ENCODE measurements at regions of chrX and their contacts with region 1.

Region 1: DNA sequence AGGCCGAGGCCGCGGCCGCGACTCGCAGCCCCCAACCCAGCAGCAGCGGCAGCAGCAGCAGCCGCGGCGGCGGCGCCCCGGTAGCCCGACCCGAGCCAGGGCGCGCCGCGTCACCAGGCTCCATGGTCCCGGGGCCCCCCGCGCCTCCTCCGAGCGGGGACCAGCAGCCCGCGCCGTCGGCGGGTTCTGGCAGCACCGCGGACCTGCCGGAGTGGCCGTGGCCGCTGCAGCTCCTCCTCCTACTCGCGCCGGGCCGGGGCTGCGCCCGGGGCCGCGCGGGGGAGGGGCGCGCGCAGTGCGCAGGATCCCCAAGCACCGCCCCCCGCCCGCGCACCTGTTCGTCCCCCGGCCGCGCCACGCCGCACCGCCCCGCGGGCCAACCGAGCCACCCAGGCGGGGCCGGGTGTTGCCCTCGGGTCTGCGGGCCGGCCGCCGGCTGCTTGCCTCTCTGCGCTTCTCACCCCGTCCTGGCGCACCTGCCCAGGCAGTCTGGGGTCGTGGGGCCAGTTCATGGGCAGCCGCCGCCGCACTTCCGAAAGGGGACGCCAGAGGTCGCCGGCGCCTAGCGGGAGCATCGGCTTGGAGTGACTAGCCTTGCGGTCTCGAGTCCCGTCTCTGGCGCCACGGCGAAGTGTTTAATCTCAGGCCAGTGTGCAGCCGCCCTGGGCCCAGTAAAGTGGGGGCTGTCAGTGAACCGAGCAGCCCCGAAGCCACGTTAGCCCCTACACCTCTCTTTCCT is at the start of gene SLC9A7:
- DNase-seq: peak; percentile 71 to 80 (median 74)
- H3K4me3 ChIP-seq: peak within 1 kb of the TSS; percentile 17 to 56
- H3K4me3 Mint-ChIP-seq: peak within 1 kb of the TSS; percentile 84 to 93 (median 92)
- H3K27ac ChIP-seq: no peak within 1 kb of the TSS
- H3K27ac Mint-ChIP-seq: peak within 1 kb of the TSS; percentile 57 to 94 (median 78)
- H3K4me1 ChIP-seq: peaks cover 6% of the 10 kb centered on the region
- H3K4me1 Mint-ChIP-seq: peaks cover 5 to 21% (median 11%) of the 10 kb centered on the region in 4 donors
- H3K27me3 ChIP-seq: no peaks in the 10 kb centered on the region
- H3K27me3 Mint-ChIP-seq: no peaks in the 10 kb centered on the region
- total RNA-seq, gene SLC9A7: 2.8 to 3.5 TPM

Region 2: GRCh38 chrX:46796574-46797191 is 37.6 kb after region 1 on chrX:
- CTCF ChIA-PET with region 1: interaction called, 58 read pairs
- POLR2A ChIA-PET with region 1: no interaction called
- intact Hi-C with region 1: loop called (anchors 1 kb)
- DNase-seq: peak; percentile 47 to 57 (median 52)
- H3K4me3 ChIP-seq: no peak overlapping the region
- H3K4me3 Mint-ChIP-seq: no peak overlapping the region
- H3K27ac ChIP-seq: no peak overlapping the region
- H3K27ac Mint-ChIP-seq: no peak overlapping the region
- H3K4me1 ChIP-seq: peaks cover 8% of the 10 kb centered on the region
- H3K4me1 Mint-ChIP-seq: peaks cover 0 to 20% (median 8%) of the 10 kb centered on the region in 4 donors
- H3K27me3 ChIP-seq: no peaks in the 10 kb centered on the region
- H3K27me3 Mint-ChIP-seq: no peaks in the 10 kb centered on the region

Region 3: DNA sequence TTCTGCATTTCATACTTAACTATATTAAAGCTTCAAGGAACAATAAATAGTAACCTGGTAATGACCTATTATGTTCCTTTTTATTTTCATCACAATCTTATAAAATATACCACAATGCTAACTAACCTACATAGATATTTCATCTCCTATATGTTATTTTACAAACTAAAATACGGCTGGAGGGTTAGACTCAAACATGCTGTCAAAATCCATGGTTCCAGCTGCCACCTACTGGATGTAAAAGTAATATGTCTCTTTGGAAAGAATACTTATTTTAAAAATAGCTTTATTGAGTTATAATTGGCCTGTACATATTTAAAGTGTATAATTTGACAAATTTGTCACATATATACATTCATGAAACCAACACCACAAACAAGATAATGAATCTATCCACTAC is 334.2 kb after region 1 on chrX:
- CTCF ChIA-PET with region 1: interaction called, 4 read pairs
- POLR2A ChIA-PET with region 1: no interaction called
- intact Hi-C with region 1: loop called (anchors 2 kb)
- DNase-seq: peak in 2 of 5 donors; percentile 8 to 12
- H3K4me3 ChIP-seq: no peak overlapping the region
- H3K4me3 Mint-ChIP-seq: no peak overlapping the region
- H3K27ac ChIP-seq: no peak overlapping the region
- H3K27ac Mint-ChIP-seq: no peak overlapping the region
- H3K4me1 ChIP-seq: no peaks in the 10 kb centered on the region
- H3K4me1 Mint-ChIP-seq: peaks cover 4 to 16% (median 10%) of the 10 kb centered on the region in 4 donors
- H3K27me3 ChIP-seq: no peaks in the 10 kb centered on the region
- H3K27me3 Mint-ChIP-seq: no peaks in the 10 kb centered on the region

Region 4: GRCh38 chrX:47873123-47873522 is 1114.0 kb after region 1 on chrX:
- CTCF ChIA-PET with region 1: no interaction called
- POLR2A ChIA-PET with region 1: no interaction called
- intact Hi-C with region 1: no loop called
- DNase-seq: no peak
- H3K4me3 ChIP-seq: no peak overlapping the region
- H3K4me3 Mint-ChIP-seq: no peak overlapping the region
- H3K27ac ChIP-seq: no peak overlapping the region
- H3K27ac Mint-ChIP-seq: no peak overlapping the region
- H3K4me1 ChIP-seq: no peaks in the 10 kb centered on the region
- H3K4me1 Mint-ChIP-seq: peaks cover 0 to 2% (median under 1%) of the 10 kb centered on the region in 4 donors
- H3K27me3 ChIP-seq: no peaks in the 10 kb centered on the region
- H3K27me3 Mint-ChIP-seq: no peaks in the 10 kb centered on the region